Endothelial cell of umbilical vein (primary cell): ENCODE measurements at regions of chr13 and their contacts with region 1.

Region 1: DNA sequence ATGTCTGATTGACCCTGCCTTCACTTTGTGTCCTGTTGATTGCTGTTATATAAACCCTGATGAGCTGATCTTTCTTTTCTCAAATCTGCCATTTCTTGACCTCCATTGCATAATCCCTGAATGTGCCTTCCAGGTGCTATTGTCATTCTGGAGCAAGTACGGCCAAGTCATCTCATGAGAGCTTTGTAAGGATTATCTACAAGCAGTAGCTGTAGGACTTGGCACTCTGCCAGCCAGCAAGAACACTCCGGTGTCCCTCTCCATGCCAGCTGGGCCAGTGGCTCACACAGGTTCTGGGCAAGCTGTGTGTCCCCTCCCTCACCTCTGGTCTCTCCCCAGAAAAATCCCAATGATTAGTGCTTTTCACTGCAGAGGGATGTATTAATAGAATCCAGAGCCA is 348.1 kb downstream of the FOXO1 start:
- DNase-seq: peak; percentile 55
- H3K4me3 ChIP-seq: no peak overlapping the region
- H3K27ac ChIP-seq: no peak overlapping the region
- H3K4me1 ChIP-seq: peaks cover 16% of the 10 kb centered on the region
- H3K27me3 ChIP-seq: no peaks in the 10 kb centered on the region
- CTCF ChIP-seq: no peak
- POLR2A ChIP-seq: no peak

Region 2: DNA sequence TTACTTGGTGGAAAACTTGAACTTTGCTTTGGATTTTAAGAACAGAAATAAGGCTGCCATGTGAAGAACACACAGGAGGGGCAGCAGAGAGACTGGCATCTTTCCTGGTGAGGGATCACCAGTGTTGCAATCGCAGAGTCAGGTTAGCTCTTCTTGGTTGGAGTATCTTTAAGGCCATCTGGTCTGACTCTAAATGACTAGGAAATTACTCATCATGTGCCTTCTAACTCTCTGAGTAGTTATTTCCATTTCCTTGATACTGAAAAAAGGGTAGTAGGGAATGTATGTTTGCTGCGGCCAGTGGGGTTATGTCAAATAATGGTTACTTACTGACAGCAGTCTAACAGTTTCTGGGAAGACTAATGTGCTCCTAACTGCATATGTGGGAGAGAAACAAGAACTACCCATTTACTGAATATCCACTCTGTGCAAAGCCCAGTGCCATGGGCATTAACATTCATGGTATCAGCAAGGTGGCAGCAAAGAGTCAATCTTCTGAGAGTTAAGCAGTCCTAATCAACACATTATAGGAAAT is 540.8 kb before region 1 on chr13:
- CTCF ChIA-PET with region 1: no interaction called
- POLR2A ChIA-PET with region 1: no interaction called
- dilution Hi-C with region 1: no loop called
- intact Hi-C with region 1: loop called (anchors 5 kb)
- DNase-seq: peak; percentile 88
- H3K4me3 ChIP-seq: no peak overlapping the region
- H3K27ac ChIP-seq: peak overlapping the region; percentile 99
- H3K4me1 ChIP-seq: peaks cover 59% of the 10 kb centered on the region
- H3K27me3 ChIP-seq: no peaks in the 10 kb centered on the region
- CTCF ChIP-seq: peak; percentile 51 to 52
- POLR2A ChIP-seq: no peak

Region 3: GRCh38 chr13:39952249-39953233 is 365.8 kb before region 1 on chr13:
- CTCF ChIA-PET with region 1: no interaction called
- POLR2A ChIA-PET with region 1: no interaction called
- dilution Hi-C with region 1: no loop called
- intact Hi-C with region 1: loop called (anchors 1 kb)
- DNase-seq: peak; percentile 97
- H3K4me3 ChIP-seq: no peak overlapping the region
- H3K27ac ChIP-seq: peak overlapping the region; percentile 88
- H3K4me1 ChIP-seq: peaks cover 24% of the 10 kb centered on the region
- H3K27me3 ChIP-seq: no peaks in the 10 kb centered on the region
- CTCF ChIP-seq: no peak
- POLR2A ChIP-seq: no peak

Region 4: GRCh38 chr13:40116008-40116407 is 202.4 kb before region 1 on chr13:
- CTCF ChIA-PET with region 1: no interaction called
- POLR2A ChIA-PET with region 1: no interaction called
- dilution Hi-C with region 1: no loop called
- intact Hi-C with region 1: loop called (anchors 10 kb)
- DNase-seq: peak; percentile 98
- H3K4me3 ChIP-seq: no peak overlapping the region
- H3K27ac ChIP-seq: peak overlapping the region; percentile 93
- H3K4me1 ChIP-seq: peaks cover 17% of the 10 kb centered on the region
- H3K27me3 ChIP-seq: no peaks in the 10 kb centered on the region
- CTCF ChIP-seq: no peak
- POLR2A ChIP-seq: no peak

Region 5: GRCh38 chr13:40477623-40478608 is 159.6 kb after region 1 on chr13:
- CTCF ChIA-PET with region 1: no interaction called
- POLR2A ChIA-PET with region 1: no interaction called
- dilution Hi-C with region 1: no loop called
- intact Hi-C with region 1: loop called (anchors 1 kb)
- DNase-seq: peak; percentile 94
- H3K4me3 ChIP-seq: peak overlapping the region in 1 of 3 experiments; percentile 10
- H3K27ac ChIP-seq: peak overlapping the region; percentile 92
- H3K4me1 ChIP-seq: peaks cover 32% of the 10 kb centered on the region
- H3K27me3 ChIP-seq: no peaks in the 10 kb centered on the region
- CTCF ChIP-seq: no peak
- POLR2A ChIP-seq: peak; percentile 36

Region 6: DNA sequence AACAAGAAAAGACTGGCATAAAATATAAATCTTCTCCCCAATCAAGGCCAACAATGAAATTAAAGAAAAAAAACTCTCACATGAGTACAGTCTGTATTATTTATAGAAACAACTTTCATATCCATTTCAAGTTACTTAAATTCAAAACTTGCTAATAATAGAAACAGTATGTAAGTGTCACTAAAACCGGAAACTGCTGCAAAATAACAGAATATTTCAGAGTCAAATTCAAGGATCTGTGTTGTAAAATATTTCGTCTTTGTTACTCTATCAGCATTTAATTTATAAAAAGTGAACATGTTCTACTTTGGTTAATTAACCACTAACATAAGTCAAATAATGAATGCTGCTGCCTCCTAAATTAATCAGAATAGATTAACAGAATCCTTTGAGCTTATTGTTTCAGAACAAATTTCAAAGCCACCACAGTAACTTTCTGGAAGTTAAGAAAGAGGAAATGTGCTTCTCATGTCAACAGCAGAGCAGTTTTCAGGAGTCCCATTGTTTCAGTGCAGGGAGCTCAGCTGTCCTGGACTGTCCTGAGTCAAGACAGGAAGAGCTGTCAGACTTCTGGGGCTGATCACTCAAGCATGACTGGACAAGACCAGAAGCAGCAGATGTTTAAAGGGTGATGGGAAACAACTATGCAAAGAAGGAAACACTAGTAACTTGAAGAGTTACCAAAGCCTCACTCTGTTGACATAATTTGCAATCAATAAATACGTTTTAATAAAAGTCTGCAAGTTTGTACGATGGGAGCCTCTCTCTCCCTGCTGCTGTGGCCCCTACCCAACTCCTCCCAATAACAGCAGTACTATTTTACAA is 271.1 kb after region 1 on chr13:
- CTCF ChIA-PET with region 1: no interaction called
- POLR2A ChIA-PET with region 1: no interaction called
- dilution Hi-C with region 1: no loop called
- intact Hi-C with region 1: loop called (anchors 5 kb)
- DNase-seq: peak; percentile 94
- H3K4me3 ChIP-seq: peak overlapping the region in 1 of 3 experiments; percentile 14
- H3K27ac ChIP-seq: peak overlapping the region; percentile 87
- H3K4me1 ChIP-seq: peaks cover 69% of the 10 kb centered on the region
- H3K27me3 ChIP-seq: no peaks in the 10 kb centered on the region
- CTCF ChIP-seq: no peak
- POLR2A ChIP-seq: peak; percentile 57